Activated CD8-positive, alpha-beta T cell treated with anti-CD3 and anti-CD28 coated beads for 36 hours (primary cell): ENCODE measurements at regions of chr12 and their contacts with region 1.

Region 1: DNA sequence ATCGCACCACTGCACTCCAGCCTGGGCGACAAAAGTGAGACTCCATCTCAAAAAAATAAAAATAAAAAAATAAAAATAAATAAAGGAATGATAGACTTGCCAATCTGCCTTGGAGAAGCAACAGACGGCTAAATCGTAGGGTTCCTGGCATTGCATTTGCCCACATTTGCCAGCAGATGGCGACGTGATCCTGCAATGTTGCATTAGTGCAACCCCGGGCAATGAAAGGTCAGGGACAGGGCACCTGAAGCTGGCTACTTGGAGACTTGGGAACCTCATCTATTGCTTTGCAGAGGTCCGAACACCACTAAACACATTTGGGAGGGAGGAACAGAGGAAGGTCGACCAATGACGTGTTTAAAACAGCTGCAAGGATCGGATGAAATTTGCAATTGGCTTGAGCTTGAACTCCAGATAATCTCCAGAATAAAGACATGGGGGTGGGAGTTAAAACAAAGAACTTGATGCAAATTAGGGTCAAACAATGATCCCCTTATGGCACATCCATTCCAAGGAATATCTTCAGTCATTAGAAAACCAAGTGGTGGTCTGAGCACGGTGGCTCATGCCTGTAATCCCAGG is 34.6 kb downstream of the SPRING1 start:
- DNase-seq: peak; percentile 72
- ATAC-seq: peak; percentile 78
- H3K4me3 Mint-ChIP-seq: no peak overlapping the region
- H3K27ac Mint-ChIP-seq: no peak overlapping the region
- H3K4me1 Mint-ChIP-seq: peaks cover 2% of the 10 kb centered on the region
- H3K27me3 Mint-ChIP-seq: peaks cover 1% of the 10 kb centered on the region
- CTCF ChIP-seq: peak; percentile 98

Region 2: GRCh38 chr12:116717466-116718437 is 14.4 kb after region 1 on chr12:
- CTCF ChIA-PET with region 1: interaction called, 21 read pairs
- POLR2A ChIA-PET with region 1: interaction called, 3 read pairs
- intact Hi-C with region 1: no loop called
- DNase-seq: no peak
- ATAC-seq: no peak
- H3K4me3 Mint-ChIP-seq: no peak overlapping the region
- H3K27ac Mint-ChIP-seq: no peak overlapping the region
- H3K4me1 Mint-ChIP-seq: peaks cover 8% of the 10 kb centered on the region
- H3K27me3 Mint-ChIP-seq: no peaks in the 10 kb centered on the region
- CTCF ChIP-seq: no peak

Region 3: DNA sequence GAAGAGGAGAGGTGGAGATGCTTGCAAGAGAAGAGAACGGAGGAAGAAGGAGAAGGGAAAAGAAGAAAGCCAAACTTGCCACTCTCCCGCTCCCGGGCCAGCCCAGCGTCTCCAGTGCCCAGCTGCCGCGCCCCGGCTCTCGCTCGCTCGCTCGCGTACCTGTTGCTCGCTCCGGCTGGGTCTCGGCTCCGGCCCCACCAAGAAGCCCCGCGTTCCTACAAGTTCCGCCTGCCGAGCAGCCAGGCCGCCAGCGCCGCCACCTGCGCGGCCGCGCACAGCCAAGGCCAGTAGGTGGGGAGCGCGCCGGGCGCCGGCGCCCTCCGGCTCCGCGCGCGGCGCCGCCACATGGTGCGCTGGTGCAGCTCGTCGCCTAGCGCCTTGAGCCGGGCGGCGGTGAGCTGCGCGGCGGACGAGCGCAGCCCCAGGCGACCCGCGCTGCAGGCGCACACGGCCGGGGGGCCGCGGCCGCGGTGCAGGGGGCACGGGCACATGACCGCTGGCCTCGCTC is 177.6 kb after region 1 on chr12:
- CTCF ChIA-PET with region 1: interaction called, 10 read pairs
- POLR2A ChIA-PET with region 1: no interaction called
- intact Hi-C with region 1: no loop called
- DNase-seq: peak; percentile 49
- ATAC-seq: peak; percentile 86
- H3K4me3 Mint-ChIP-seq: peak overlapping the region; percentile 69
- H3K27ac Mint-ChIP-seq: no peak overlapping the region
- H3K4me1 Mint-ChIP-seq: peaks cover 24% of the 10 kb centered on the region
- H3K27me3 Mint-ChIP-seq: peaks cover 66% of the 10 kb centered on the region
- CTCF ChIP-seq: no peak

Region 4: GRCh38 chr12:116955382-116956021 is 252.2 kb after region 1 on chr12:
- CTCF ChIA-PET with region 1: interaction called, 9 read pairs
- POLR2A ChIA-PET with region 1: no interaction called
- intact Hi-C with region 1: loop called (anchors 10 kb)
- DNase-seq: peak; percentile 13
- ATAC-seq: no peak
- H3K4me3 Mint-ChIP-seq: no peak overlapping the region
- H3K27ac Mint-ChIP-seq: no peak overlapping the region
- H3K4me1 Mint-ChIP-seq: peaks cover 16% of the 10 kb centered on the region
- H3K27me3 Mint-ChIP-seq: no peaks in the 10 kb centered on the region
- CTCF ChIP-seq: no peak

Region 5: DNA sequence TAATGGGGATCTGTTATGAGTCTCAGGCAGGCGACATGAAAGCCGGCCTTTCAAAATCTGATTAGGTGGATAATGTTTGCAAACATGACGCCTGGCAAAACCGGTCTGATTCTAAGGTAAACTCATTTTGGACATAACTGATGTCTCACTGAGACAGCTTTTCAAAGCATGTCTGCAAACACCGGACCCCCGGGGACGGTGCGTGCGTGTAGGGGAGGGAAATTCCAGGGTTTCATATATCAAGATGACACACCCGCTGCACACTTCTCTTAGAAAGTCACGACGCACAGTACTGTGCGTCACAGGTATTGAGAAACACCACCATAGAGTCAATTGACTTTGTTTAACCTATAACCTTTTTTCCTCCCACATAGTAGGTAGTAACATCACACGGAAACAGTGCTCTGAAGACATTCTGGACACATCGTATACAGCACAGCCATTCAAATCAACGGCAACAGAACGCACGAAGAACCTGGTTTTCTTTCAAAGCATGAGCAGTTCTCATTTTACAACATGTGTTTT is 439.8 kb after region 1 on chr12:
- CTCF ChIA-PET with region 1: no interaction called
- POLR2A ChIA-PET with region 1: no interaction called
- intact Hi-C with region 1: loop called (anchors 10 kb)
- DNase-seq: no peak
- ATAC-seq: peak; percentile 34
- H3K4me3 Mint-ChIP-seq: no peak overlapping the region
- H3K27ac Mint-ChIP-seq: peak overlapping the region; percentile 47
- H3K4me1 Mint-ChIP-seq: peaks cover 5% of the 10 kb centered on the region
- H3K27me3 Mint-ChIP-seq: no peaks in the 10 kb centered on the region
- CTCF ChIP-seq: no peak